Psoas muscle (tissue), 8 donors: ENCODE measurements at regions of chr3 and their contacts with region 1.

Region 1: DNA sequence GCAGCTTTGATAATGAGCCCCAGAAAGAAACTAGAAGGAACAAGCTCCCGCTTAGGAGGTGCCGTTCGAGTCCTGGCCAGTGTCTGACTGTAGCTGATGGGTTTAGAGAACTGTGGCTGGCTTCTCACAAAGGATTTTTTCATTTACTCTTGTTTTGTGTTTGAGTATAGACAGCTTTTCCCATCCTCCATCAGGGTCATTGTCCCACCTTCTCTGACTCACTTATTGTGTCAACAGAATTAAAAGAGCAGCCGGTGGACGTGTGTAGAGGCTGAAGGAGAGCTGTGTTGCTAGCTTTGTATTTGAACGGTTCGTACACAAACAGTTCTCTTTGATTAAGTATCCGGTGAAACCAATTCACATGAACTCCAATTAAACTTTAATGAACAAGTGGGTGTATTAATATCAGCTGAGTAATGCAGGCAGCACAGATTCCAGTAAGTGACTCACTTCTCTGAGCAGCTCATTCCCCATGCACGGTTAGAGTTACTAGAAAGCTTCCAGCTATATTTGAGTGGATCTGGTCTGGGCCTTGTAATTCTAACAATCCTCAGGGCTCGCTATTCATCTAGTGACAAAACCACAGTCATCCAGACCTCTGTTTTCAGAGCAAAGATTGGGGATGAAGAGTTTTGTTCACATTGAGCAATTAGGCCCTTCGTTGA is 141.0 kb downstream of the LPP start:
- DNase-seq: no peak
- ATAC-seq: peak; percentile 95 to 98 (median 96)
- H3K4me3 ChIP-seq: peak overlapping the region; percentile 46
- H3K27ac ChIP-seq: peak overlapping the region; percentile 92
- H3K4me1 ChIP-seq: peaks cover 42% of the 10 kb centered on the region
- H3K27me3 ChIP-seq: no peaks in the 10 kb centered on the region
- CTCF ChIP-seq: no peak

Region 2: GRCh38 chr3:188076176-188076575 is 218.8 kb before region 1 on chr3:
- intact Hi-C with region 1: no loop called
- DNase-seq: peak; percentile 28 to 78
- ATAC-seq: peak; percentile 34 to 87 (median 67)
- H3K4me3 ChIP-seq: no peak overlapping the region
- H3K27ac ChIP-seq: peak overlapping the region; percentile 30
- H3K4me1 ChIP-seq: peaks cover 10% of the 10 kb centered on the region
- H3K27me3 ChIP-seq: no peaks in the 10 kb centered on the region
- CTCF ChIP-seq: no peak

Region 3: DNA sequence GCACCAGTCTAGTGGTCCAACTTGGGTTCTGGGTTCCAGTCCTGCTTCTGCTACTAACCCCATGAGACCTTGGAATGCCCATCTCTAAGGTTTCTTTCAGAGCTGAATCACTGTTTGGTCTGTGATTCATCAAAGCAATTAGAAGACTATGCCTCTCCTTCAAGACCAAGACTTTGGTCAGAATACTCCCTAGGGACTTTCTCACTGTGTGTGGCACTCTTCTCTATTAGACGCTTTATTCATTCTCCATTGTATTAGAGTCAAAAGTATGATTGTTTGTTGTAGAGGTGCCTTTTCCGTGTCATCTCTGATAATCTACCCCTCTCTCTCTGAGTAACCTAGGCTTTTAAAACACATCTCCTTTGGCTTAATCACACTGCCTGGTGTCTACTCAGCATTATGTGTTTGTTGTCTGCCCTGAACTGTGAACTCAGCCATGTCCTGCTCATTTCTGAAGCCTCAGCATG is 50.5 kb before region 1 on chr3:
- intact Hi-C with region 1: no loop called
- DNase-seq: no peak
- ATAC-seq: no peak
- H3K4me3 ChIP-seq: no peak overlapping the region
- H3K27ac ChIP-seq: no peak overlapping the region
- H3K4me1 ChIP-seq: peaks cover 56% of the 10 kb centered on the region
- H3K27me3 ChIP-seq: no peaks in the 10 kb centered on the region
- CTCF ChIP-seq: no peak

Region 4: DNA sequence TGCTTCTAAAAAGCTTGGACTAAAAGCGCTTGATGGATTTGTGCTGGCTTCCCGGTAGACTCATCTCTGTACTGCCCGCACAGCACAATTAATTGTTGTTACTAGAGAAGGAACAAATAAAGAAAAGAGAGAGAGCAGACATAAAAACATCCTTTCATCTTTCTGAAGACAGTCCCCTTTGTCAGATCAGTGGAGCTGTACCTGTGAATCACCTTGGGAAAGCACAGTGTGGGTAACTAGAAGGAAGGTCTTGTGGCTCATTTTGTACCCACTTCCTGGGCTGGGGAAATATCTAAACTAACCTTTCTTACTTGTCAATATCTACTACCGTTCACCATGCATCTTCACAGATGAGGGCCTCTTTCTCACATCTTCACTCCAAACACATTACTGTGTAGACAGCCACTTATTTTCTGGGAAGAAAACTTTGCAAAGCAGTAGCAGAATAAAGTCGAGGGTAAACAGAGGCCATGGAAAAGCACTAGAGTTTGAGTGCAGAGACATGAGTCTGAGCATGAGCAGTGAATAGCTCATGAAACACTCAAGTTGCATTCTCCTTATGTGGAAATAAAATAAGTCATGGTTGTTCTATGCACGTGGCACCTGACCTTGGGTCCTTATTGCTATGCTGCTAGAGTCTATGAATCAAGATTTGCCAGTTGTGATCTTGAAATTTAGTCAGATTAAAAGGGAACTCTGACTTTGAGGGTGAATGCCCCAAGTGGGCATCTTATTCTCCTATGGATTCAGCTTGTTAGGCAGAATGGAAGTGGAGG is 28.3 kb after region 1 on chr3:
- intact Hi-C with region 1: loop called in 1 of 2 experiments (anchors 2 kb)
- DNase-seq: no peak
- ATAC-seq: no peak
- H3K4me3 ChIP-seq: no peak overlapping the region
- H3K27ac ChIP-seq: no peak overlapping the region
- H3K4me1 ChIP-seq: peaks cover 23% of the 10 kb centered on the region
- H3K27me3 ChIP-seq: no peaks in the 10 kb centered on the region
- CTCF ChIP-seq: no peak

Region 5: GRCh38 chr3:188339410-188340295 is 44.7 kb after region 1 on chr3:
- intact Hi-C with region 1: loop called (anchors 2 to 5 kb)
- DNase-seq: no peak
- ATAC-seq: peak in 3 of 4 donors; percentile 25 to 47 (median 26)
- H3K4me3 ChIP-seq: no peak overlapping the region
- H3K27ac ChIP-seq: peak overlapping the region; percentile 62
- H3K4me1 ChIP-seq: peaks cover 46% of the 10 kb centered on the region
- H3K27me3 ChIP-seq: no peaks in the 10 kb centered on the region
- CTCF ChIP-seq: no peak

Region 6: DNA sequence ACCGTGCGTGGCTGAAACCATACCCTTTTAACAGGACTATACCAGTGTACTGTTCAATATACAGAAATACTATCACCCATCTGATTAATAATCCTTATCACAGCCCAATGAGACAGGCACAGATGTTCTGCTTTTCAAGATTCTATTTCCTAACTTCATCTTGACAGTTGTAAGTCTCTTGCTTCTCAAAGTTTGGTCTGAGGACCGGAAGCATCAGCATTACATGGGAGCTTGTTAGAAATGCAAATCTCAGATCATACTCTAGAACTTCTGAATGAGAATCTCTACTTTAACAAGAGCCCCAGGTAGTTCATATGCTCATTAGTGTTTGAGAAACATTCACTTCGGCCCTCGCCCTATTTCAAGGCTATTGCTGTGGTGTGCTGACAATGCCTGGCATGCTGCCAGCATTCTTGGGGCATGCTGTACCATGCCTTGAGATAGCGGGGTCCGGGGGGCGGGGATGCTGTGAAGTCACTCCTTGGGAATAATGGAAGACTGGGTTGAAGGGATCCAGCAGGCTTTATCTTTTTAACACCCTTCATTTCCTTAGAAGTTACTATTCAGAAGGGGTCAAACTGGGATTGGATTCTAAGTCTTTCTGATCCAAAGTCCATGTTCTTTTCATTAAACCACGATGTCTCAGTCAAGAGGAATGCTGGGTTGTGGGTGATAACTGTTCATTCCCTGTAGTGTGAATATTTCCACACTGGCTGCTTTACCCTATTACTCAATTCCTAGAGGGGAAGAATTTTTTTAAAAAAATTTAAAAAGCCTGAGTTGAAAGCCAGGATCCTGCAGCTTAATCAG is 53.7 kb after region 1 on chr3:
- intact Hi-C with region 1: loop called in 1 of 2 experiments (anchors 2 kb)
- DNase-seq: peak; percentile 77 to 81
- ATAC-seq: peak in 3 of 4 donors; percentile 32 to 61 (median 47)
- H3K4me3 ChIP-seq: no peak overlapping the region
- H3K27ac ChIP-seq: peak overlapping the region; percentile 72
- H3K4me1 ChIP-seq: peaks cover 51% of the 10 kb centered on the region
- H3K27me3 ChIP-seq: no peaks in the 10 kb centered on the region
- CTCF ChIP-seq: no peak

Region 7: DNA sequence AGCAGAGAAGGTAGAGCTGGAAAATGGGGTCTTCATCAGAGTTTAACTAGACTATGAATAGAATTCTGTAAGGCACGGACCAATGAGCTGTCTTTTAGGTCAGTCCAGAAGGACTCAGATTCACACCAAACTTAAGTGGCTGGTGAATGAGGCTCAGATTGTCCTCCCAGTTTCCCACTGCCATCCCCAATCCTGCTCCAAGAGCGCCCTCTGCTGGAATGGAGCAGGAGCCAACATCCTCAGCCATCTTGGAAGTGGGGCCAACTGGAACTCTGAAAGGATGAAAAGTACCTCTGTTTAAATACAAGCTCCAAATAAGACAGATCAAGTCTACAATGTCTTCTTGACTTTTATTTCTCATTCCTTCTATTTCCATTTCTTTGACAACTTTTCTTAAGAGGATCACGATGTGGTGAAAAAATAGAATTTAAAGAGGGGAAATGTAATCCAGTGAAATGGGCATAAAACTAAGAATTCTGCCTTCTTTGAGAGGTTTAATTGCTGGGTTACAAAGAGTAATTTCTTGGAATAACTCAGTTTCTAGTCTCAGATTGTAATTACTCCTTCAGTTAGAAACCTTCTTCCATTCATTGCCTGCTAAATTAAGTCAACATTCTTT is 659.7 kb after region 1 on chr3:
- intact Hi-C with region 1: loop called in 1 of 2 experiments (anchors 10 kb)
- DNase-seq: peak; percentile 86 to 90
- ATAC-seq: peak; percentile 85 to 90 (median 87)
- H3K4me3 ChIP-seq: no peak overlapping the region
- H3K27ac ChIP-seq: peak overlapping the region; percentile 44
- H3K4me1 ChIP-seq: peaks cover 28% of the 10 kb centered on the region
- H3K27me3 ChIP-seq: no peaks in the 10 kb centered on the region
- CTCF ChIP-seq: peak; percentile 97